ENCODE measurements at regions of chr3 and their contacts with region 1.

Region 1: GRCh38 chr3:100269410-100270217 is 8.8 kb downstream of the TBC1D23 start:
- DNase-seq: peak; percentile 94
- ATAC-seq: peak; percentile 87
- H3K4me3 ChIP-seq: peak overlapping the region; percentile 45
- H3K27ac ChIP-seq: peak overlapping the region; percentile 69
- H3K4me1 ChIP-seq: peaks cover 42% of the 10 kb centered on the region
- H3K27me3 ChIP-seq: no peaks in the 10 kb centered on the region
- CTCF ChIP-seq: no peak

Region 2: DNA sequence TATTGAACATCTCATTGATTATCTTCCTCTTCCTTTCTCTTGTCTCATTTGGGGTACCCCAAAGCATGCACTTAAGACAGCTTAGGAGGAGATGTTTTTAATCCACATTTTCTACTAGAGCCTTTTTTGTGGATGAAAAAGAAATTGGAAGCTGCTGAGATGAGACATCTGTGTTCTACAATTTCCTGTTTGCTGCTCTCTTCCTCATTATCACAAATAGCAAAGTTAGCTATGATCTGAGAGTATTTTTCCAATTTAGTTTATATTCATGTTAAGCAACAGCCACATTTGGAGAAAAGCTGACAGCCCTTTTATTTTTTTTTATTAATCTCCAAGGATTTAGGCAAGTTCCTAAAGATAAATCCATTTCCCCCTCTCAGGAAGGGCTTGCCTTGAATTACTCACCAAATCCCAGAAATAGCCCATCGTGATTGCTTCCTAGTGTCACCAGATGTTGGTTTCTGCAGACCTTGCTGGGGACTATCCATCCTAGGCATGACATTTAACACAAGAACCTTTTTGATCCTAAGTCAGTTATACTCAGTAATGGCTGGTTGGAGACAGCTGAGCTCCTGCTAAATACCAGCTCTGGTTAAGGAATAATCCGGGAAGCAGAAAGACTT is 84.6 kb before region 1 on chr3:
- CTCF ChIA-PET with region 1: no interaction called
- POLR2A ChIA-PET with region 1: no interaction called
- intact Hi-C with region 1: no loop called
- DNase-seq: no peak
- ATAC-seq: no peak
- H3K4me3 ChIP-seq: no peak overlapping the region
- H3K27ac ChIP-seq: no peak overlapping the region
- H3K4me1 ChIP-seq: no peaks in the 10 kb centered on the region
- H3K27me3 ChIP-seq: no peaks in the 10 kb centered on the region
- CTCF ChIP-seq: no peak

Region 3: GRCh38 chr3:100311011-100311410 is 41.4 kb after region 1 on chr3:
- CTCF ChIA-PET with region 1: no interaction called
- POLR2A ChIA-PET with region 1: no interaction called
- intact Hi-C with region 1: loop called (anchors 5 kb)
- DNase-seq: no peak
- ATAC-seq: no peak
- H3K4me3 ChIP-seq: peak overlapping the region; percentile 14
- H3K27ac ChIP-seq: peak overlapping the region; percentile 47
- H3K4me1 ChIP-seq: peaks cover 21% of the 10 kb centered on the region
- H3K27me3 ChIP-seq: no peaks in the 10 kb centered on the region
- CTCF ChIP-seq: no peak

Region 4: GRCh38 chr3:100537622-100538338 is 268.2 kb after region 1 on chr3:
- CTCF ChIA-PET with region 1: no interaction called
- POLR2A ChIA-PET with region 1: interaction called, 13 read pairs
- intact Hi-C with region 1: no loop called
- DNase-seq: peak; percentile 72
- ATAC-seq: no peak
- H3K4me3 ChIP-seq: no peak overlapping the region
- H3K27ac ChIP-seq: peak overlapping the region; percentile 76
- H3K4me1 ChIP-seq: peaks cover 49% of the 10 kb centered on the region
- H3K27me3 ChIP-seq: no peaks in the 10 kb centered on the region
- CTCF ChIP-seq: no peak

Region 5: DNA sequence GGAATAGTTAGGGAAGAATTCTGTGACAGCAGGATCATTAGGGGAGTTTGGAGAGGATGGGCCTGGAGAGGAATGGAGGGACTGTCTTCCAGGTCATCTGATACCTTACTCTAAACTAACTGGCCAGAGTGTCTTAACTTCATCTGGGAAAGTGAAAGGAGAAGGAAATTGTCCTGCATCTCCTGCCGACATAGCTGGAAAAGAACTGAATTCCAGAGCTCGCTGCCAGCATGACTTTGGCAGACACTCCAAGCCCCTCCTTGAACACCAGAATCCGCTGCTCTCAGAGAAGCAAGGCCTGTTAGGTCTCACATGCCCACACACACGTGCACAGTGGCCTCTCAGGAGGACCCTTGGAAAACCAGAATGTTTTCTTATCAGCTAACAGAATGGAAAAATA is 713.1 kb after region 1 on chr3:
- CTCF ChIA-PET with region 1: no interaction called
- POLR2A ChIA-PET with region 1: no interaction called
- intact Hi-C with region 1: no loop called
- DNase-seq: no peak
- ATAC-seq: no peak
- H3K4me3 ChIP-seq: no peak overlapping the region
- H3K27ac ChIP-seq: no peak overlapping the region
- H3K4me1 ChIP-seq: no peaks in the 10 kb centered on the region
- H3K27me3 ChIP-seq: no peaks in the 10 kb centered on the region
- CTCF ChIP-seq: no peak

Measured in PC-3 (cell line).